ENCODE measurements at regions of chr17 and their contacts with region 1.

Region 1: GRCh38 chr17:48374650-48375230 is 55.3 kb downstream of the SKAP1 start:
- DNase-seq: peak; percentile 70
- H3K4me3 ChIP-seq: no peak overlapping the region
- H3K27ac ChIP-seq: no peak overlapping the region
- H3K4me1 ChIP-seq: no peaks in the 10 kb centered on the region
- H3K27me3 ChIP-seq: peaks cover 24% of the 10 kb centered on the region
- CTCF ChIP-seq: peak; percentile 92

Region 2: DNA sequence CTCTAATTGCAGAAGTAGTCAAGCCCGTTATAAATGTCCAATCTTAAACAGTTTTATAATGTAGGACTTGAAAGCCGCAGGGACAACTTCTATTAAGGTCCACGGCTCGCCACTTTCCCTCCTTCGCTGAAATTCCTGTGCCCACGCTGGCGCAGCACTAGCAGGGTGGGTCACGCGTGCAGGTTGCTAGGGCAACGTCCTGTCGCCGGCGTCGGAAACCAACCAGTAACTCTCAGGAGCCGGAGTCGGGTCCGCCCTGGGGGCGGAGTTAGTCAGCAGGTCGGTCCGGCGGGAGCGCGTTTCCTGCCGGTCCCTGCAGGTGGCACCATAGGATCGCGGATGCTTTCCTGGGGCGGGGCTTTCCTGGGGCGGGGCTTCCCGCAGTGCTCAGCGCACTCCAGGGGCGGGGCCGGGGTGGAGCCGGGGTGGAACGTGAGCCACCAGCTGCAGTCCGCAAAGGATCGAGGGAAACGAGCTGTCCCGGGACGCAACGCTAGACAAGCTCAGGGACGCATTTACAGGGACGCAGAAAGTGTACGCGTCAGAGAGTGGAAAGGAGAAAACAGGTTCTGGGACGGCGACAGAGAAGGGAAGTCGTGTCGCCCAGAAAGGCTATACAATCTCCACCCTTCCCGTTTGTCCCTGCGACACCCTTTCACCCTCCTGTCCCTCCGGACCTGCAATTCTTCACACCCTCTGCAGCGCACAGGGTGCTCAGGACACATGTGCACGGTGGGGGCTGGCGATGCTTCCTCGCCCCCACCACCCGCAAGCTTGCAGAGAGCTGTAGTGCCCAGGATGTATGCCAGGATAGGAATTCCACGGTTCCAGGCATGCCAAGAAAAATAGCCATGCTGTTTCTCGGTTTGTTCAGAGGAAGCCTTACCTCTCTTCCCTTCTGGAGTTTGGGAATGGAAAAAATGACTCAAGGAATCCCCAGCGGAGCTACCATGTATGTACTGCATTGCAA is 349.5 kb before region 1 on chr17:
- CTCF ChIA-PET with region 1: no interaction called
- POLR2A ChIA-PET with region 1: no interaction called
- intact Hi-C with region 1: loop called (anchors 10 kb)
- DNase-seq: peak; percentile 99
- H3K4me3 ChIP-seq: peak overlapping the region; percentile 46
- H3K27ac ChIP-seq: peak overlapping the region; percentile 57
- H3K4me1 ChIP-seq: peaks cover 44% of the 10 kb centered on the region
- H3K27me3 ChIP-seq: no peaks in the 10 kb centered on the region
- CTCF ChIP-seq: peak; percentile 95

Region 3: DNA sequence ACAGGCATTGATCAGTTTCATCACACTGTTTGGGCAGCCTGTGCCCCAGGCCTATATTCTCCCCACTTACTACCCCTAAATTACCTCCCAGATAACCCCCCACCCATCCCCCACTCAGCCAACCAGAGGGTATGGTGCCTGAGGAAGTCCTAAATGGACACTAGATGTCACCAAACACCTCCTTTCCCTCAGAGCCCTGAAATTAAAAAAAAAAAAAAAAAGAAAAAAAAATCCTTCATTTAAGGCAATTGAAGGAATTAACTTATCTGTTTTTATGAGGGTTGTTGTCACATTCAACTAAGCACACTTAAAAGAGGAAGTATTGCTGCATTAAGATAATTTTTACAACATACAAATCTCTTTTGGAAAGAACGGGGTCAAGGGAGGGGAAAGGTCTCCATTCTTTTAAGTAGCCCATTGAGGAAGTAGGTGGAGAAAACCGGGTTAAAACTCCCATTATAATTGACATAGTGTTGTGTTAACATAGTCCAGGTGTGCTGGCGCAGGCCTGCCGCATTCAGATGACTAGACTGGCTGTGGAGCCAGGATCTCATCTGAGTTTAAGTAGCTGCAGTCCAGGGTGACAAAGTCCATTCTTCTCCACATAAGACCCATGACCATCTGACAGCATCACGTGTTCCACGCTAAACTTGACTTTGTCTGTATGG is 220.9 kb before region 1 on chr17:
- CTCF ChIA-PET with region 1: no interaction called
- POLR2A ChIA-PET with region 1: no interaction called
- intact Hi-C with region 1: loop called (anchors 10 kb)
- DNase-seq: peak; percentile 77
- H3K4me3 ChIP-seq: no peak overlapping the region
- H3K27ac ChIP-seq: no peak overlapping the region
- H3K4me1 ChIP-seq: peaks cover 36% of the 10 kb centered on the region
- H3K27me3 ChIP-seq: no peaks in the 10 kb centered on the region
- CTCF ChIP-seq: peak; percentile 83

Region 4: DNA sequence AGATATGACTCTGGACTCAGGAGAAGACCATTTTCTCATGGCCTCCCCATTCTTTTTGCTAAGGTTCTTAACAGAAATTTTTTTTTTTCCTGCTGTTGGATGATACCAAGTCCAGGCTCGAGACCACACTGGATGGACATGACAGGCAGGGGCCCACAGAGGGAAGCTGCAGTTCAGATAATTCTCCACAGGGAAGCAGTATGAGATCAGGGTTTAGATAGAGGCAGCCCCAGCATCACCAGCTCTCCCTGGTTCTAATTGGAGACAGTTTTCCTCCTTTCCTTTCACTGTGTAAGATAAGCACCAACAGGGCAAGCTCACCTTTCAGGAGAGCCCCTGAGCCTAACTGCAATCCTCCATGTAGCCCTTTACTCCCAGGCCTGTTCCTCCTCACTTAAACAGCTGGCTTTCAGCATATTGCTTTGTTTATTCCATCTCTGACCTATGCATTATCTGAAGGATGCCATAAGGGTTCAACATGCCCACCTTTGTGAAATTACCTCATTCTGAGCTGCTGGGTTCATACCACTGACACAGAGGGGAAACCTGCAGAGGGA is 159.1 kb before region 1 on chr17:
- CTCF ChIA-PET with region 1: no interaction called
- POLR2A ChIA-PET with region 1: no interaction called
- intact Hi-C with region 1: loop called (anchors 2 kb)
- DNase-seq: peak; percentile 74
- H3K4me3 ChIP-seq: no peak overlapping the region
- H3K27ac ChIP-seq: no peak overlapping the region
- H3K4me1 ChIP-seq: peaks cover 4% of the 10 kb centered on the region
- H3K27me3 ChIP-seq: no peaks in the 10 kb centered on the region
- CTCF ChIP-seq: peak; percentile 75

Region 5: GRCh38 chr17:48259694-48260291 is 114.9 kb before region 1 on chr17:
- CTCF ChIA-PET with region 1: no interaction called
- POLR2A ChIA-PET with region 1: no interaction called
- intact Hi-C with region 1: loop called (anchors 5 kb)
- DNase-seq: peak; percentile 64
- H3K4me3 ChIP-seq: no peak overlapping the region
- H3K27ac ChIP-seq: no peak overlapping the region
- H3K4me1 ChIP-seq: peaks cover 39% of the 10 kb centered on the region
- H3K27me3 ChIP-seq: no peaks in the 10 kb centered on the region
- CTCF ChIP-seq: peak; percentile 69

Region 6: GRCh38 chr17:48388955-48389743 is 14.4 kb after region 1 on chr17:
- CTCF ChIA-PET with region 1: no interaction called
- POLR2A ChIA-PET with region 1: no interaction called
- intact Hi-C with region 1: no loop called
- DNase-seq: peak; percentile 44
- H3K4me3 ChIP-seq: no peak overlapping the region
- H3K27ac ChIP-seq: no peak overlapping the region
- H3K4me1 ChIP-seq: peaks cover 34% of the 10 kb centered on the region
- H3K27me3 ChIP-seq: peaks cover 30% of the 10 kb centered on the region
- CTCF ChIP-seq: no peak

Measured in A673 (cell line).